Activated B cell treated with CpG ODN at 0.5 μM for 24 hours (primary cell): ENCODE measurements at regions of chr6 and their contacts with region 1.

Region 1: DNA sequence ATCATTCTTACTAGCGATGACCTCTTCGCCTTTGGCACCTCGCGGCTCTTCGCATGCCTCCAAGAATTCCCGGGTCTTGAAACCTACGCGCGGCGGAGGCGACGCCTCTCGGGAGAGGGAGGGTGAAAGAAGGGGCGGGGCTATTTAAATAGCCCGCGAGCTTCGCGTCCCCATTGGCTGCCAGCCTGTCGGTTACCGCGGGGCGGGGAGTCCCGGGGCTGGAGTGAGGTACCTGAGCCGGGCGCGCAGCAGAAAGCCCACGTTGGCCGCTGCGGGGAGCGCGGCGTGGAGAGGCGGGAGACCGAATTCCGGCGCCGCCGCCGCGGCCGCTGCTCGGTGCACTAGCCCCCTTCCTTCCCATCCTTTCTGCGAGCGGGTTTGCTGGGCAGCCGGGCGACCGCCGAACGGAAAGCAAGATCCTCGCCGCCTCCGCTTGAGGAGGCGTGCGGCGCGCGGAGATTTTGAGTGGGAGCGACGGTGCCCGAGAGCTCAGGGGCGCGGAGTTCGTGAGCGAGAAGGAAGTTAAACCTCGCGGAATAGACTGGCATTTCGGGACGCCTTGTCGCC is at the start of gene BMP6:
- DNase-seq: peak; percentile 57
- ATAC-seq: peak; percentile 85
- H3K4me3 Mint-ChIP-seq: peak within 1 kb of the TSS; percentile 83
- H3K27ac Mint-ChIP-seq: no peak within 1 kb of the TSS
- H3K4me1 Mint-ChIP-seq: peaks cover 30% of the 10 kb centered on the region
- H3K27me3 Mint-ChIP-seq: peaks cover 53% of the 10 kb centered on the region
- CTCF ChIP-seq: no peak
- total RNA-seq, gene BMP6: 0.75 and 0.78 TPM in 2 replicates

Region 2: DNA sequence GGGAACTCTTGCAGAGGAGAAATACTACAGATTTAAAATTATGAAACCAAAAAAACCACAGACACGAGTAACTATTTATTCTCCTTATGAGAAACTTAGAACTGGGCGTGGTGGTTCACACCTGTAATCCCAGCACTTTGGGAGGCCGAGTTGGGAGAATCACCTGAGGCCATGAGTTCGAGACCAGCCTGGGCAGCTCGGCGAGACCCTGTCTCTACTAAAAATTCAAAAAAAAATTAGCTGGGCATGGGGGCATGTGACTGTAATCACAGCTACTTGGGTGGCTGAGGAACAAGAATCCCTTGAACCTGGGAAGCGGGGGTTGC is 449.8 kb before region 1 on chr6:
- CTCF ChIA-PET with region 1: no interaction called
- POLR2A ChIA-PET with region 1: no interaction called
- intact Hi-C with region 1: loop called (anchors 2 kb)
- DNase-seq: no peak
- ATAC-seq: no peak
- H3K4me3 Mint-ChIP-seq: peak overlapping the region; percentile 53
- H3K27ac Mint-ChIP-seq: peak overlapping the region; percentile 67
- H3K4me1 Mint-ChIP-seq: peaks cover 36% of the 10 kb centered on the region
- H3K27me3 Mint-ChIP-seq: no peaks in the 10 kb centered on the region
- CTCF ChIP-seq: no peak

Region 3: DNA sequence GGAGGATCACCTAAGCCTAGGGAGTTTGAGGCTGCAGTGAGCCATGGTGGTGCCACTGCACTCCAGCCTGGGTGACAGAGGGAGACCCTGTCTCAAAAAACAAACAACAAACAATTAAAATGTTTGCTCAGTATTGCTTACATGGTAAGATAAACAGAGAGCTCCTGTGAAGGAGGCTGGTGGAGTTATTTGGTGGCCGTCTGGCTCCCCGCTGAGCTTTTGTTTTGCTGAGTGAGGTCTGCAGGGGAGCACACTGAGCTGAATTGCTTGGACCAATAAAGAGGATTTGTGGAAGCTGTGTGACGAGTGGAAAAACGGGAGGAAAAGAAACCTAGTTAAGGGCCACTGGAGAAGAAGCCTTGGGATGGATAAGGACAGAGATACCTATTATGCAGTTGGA is 41.1 kb before region 1 on chr6:
- CTCF ChIA-PET with region 1: no interaction called
- POLR2A ChIA-PET with region 1: no interaction called
- intact Hi-C with region 1: no loop called
- DNase-seq: no peak
- ATAC-seq: no peak
- H3K4me3 Mint-ChIP-seq: no peak overlapping the region
- H3K27ac Mint-ChIP-seq: no peak overlapping the region
- H3K4me1 Mint-ChIP-seq: no peaks in the 10 kb centered on the region
- H3K27me3 Mint-ChIP-seq: peaks cover 16% of the 10 kb centered on the region
- CTCF ChIP-seq: no peak

Region 4: GRCh38 chr6:7933794-7934193 is 207.9 kb after region 1 on chr6:
- CTCF ChIA-PET with region 1: interaction called, 3 read pairs
- POLR2A ChIA-PET with region 1: no interaction called
- intact Hi-C with region 1: loop called (anchors 1 kb)
- DNase-seq: no peak
- ATAC-seq: peak; percentile 98
- H3K4me3 Mint-ChIP-seq: no peak overlapping the region
- H3K27ac Mint-ChIP-seq: peak overlapping the region; percentile 46
- H3K4me1 Mint-ChIP-seq: peaks cover 34% of the 10 kb centered on the region
- H3K27me3 Mint-ChIP-seq: no peaks in the 10 kb centered on the region
- CTCF ChIP-seq: no peak

Region 5: GRCh38 chr6:8006208-8006607 is 280.3 kb after region 1 on chr6:
- CTCF ChIA-PET with region 1: interaction called, 36 read pairs
- POLR2A ChIA-PET with region 1: interaction called, 4 read pairs
- intact Hi-C with region 1: loop called (anchors 1 kb)
- DNase-seq: no peak
- ATAC-seq: no peak
- H3K4me3 Mint-ChIP-seq: no peak overlapping the region
- H3K27ac Mint-ChIP-seq: no peak overlapping the region
- H3K4me1 Mint-ChIP-seq: no peaks in the 10 kb centered on the region
- H3K27me3 Mint-ChIP-seq: no peaks in the 10 kb centered on the region
- CTCF ChIP-seq: no peak

Region 6: GRCh38 chr6:8219352-8219943 is 493.5 kb after region 1 on chr6:
- CTCF ChIA-PET with region 1: interaction called, 26 read pairs
- POLR2A ChIA-PET with region 1: no interaction called
- intact Hi-C with region 1: no loop called
- DNase-seq: no peak
- ATAC-seq: peak; percentile 57
- H3K4me3 Mint-ChIP-seq: no peak overlapping the region
- H3K27ac Mint-ChIP-seq: no peak overlapping the region
- H3K4me1 Mint-ChIP-seq: no peaks in the 10 kb centered on the region
- H3K27me3 Mint-ChIP-seq: peaks cover 5% of the 10 kb centered on the region
- CTCF ChIP-seq: no peak